Ascending aorta (tissue), 2 donors: ENCODE measurements at regions of chr3 and their contacts with region 1.

Region 1: GRCh38 chr3:157785102-157785826 is 282.0 kb upstream of the VEPH1 start:
- DNase-seq: peak in 1 of 2 donors; percentile 62
- H3K4me3 ChIP-seq: no peak overlapping the region
- H3K27ac ChIP-seq: peak overlapping the region in 1 of 2 donors; percentile 5
- H3K4me1 ChIP-seq: peaks cover 0 to 10% of the 10 kb centered on the region in 2 donors
- H3K27me3 ChIP-seq: no peaks in the 10 kb centered on the region
- CTCF ChIP-seq: no peak

Region 2: GRCh38 chr3:157865352-157866000 is 80.2 kb after region 1 on chr3:
- intact Hi-C with region 1: loop called (anchors 5 kb)
- DNase-seq: no peak
- H3K4me3 ChIP-seq: no peak overlapping the region
- H3K27ac ChIP-seq: no peak overlapping the region
- H3K4me1 ChIP-seq: peaks cover 0 to 4% of the 10 kb centered on the region in 2 donors
- H3K27me3 ChIP-seq: no peaks in the 10 kb centered on the region
- CTCF ChIP-seq: peak in 1 of 3 experiments; percentile 6